ENCODE measurements at regions of chr7 and their contacts with region 1.

Region 1: DNA sequence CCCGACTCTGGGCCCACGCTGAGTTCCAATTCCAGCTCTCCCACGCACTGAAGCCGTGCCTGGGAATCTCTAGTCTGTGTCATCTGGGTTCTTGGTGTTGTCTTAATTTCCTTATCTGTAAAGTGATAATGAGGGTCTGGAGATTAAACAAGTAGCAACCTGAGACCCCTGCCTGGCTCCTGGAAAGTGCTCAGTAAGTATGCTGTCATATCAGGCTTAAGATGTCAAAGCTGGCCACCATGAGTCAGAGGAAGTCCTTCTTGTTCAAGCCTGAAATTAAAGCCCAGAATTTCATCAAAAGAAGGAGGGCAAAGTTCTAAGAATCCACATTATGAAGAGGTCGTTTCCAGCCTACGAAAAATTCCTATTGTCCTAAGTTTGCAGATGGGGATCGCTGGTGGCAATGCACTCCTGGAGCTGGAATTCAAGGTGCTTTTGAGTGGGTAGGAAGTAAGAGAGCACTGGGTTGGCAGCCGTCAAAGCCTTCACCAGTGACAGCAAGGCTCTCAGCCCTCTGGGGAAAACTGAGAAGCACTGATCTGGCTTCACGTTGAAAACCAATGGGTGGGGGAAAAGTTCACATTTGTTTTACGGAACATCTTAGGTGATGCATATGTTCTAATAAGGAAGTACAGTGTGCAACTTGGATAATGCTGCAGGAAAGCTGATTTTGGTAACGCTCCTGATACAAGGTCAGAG is 50.3 kb upstream of the NCAPG2 start:
- DNase-seq: no peak
- H3K4me3 ChIP-seq: no peak overlapping the region
- CTCF ChIP-seq: no peak

Region 2: DNA sequence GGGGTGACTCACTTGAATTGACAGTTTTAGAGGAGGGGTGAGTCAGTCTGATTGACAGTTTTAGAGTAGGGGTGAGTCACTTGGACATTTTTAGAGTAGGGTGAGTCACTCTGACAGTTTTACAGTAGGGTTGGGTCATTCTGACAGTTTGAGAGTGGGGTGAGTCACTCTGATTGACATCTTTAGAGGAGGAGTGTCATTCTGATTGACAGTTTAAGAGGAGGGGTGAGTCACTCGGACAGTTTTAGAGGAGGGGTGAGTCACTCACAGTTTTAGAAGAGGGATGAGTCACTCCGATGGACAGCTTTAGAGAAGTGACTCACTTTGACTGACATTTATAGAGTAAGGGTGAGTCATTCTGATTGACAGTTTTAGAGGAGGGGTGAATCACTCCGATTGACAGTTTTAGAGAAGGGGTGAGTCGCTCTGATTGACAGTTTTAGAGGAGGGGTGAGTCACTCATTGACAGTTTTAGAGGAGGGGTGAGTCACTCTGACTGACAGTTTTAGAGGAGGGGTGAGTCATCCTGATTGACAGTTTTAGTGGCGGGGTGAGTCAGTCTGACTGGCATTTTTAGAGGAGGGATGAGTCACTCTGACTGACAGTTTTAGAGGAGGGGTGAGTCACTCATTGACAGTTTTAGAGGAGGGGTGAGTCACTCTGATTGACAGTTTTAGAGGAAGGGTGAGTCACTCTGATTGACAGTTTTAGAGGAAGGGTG is 822.2 kb before region 1 on chr7:
- CTCF ChIA-PET with region 1: no interaction called
- POLR2A ChIA-PET with region 1: no interaction called
- DNase-seq: no peak
- H3K4me3 ChIP-seq: no peak overlapping the region
- CTCF ChIP-seq: no peak

Region 3: GRCh38 chr7:158587162-158588084 is 167.5 kb before region 1 on chr7 and contains the start of gene PTPRN2:
- CTCF ChIA-PET with region 1: no interaction called
- POLR2A ChIA-PET with region 1: no interaction called
- DNase-seq: no peak
- H3K4me3 ChIP-seq: peak within 1 kb of the TSS; percentile 49
- CTCF ChIP-seq: no peak

Region 4: GRCh38 chr7:158740013-158740656 is 14.8 kb before region 1 on chr7:
- CTCF ChIA-PET with region 1: interaction called, 14 read pairs
- POLR2A ChIA-PET with region 1: no interaction called
- DNase-seq: peak; percentile 58
- H3K4me3 ChIP-seq: 0 out of 2 replicates have a peak overlapping the region, but pooled peaks have one; percentile 12
- CTCF ChIP-seq: no peak

Region 5: GRCh38 chr7:158772911-158773310 is 18.0 kb after region 1 on chr7:
- CTCF ChIA-PET with region 1: no interaction called
- POLR2A ChIA-PET with region 1: no interaction called
- DNase-seq: no peak
- H3K4me3 ChIP-seq: no peak overlapping the region
- CTCF ChIP-seq: no peak

Region 6: DNA sequence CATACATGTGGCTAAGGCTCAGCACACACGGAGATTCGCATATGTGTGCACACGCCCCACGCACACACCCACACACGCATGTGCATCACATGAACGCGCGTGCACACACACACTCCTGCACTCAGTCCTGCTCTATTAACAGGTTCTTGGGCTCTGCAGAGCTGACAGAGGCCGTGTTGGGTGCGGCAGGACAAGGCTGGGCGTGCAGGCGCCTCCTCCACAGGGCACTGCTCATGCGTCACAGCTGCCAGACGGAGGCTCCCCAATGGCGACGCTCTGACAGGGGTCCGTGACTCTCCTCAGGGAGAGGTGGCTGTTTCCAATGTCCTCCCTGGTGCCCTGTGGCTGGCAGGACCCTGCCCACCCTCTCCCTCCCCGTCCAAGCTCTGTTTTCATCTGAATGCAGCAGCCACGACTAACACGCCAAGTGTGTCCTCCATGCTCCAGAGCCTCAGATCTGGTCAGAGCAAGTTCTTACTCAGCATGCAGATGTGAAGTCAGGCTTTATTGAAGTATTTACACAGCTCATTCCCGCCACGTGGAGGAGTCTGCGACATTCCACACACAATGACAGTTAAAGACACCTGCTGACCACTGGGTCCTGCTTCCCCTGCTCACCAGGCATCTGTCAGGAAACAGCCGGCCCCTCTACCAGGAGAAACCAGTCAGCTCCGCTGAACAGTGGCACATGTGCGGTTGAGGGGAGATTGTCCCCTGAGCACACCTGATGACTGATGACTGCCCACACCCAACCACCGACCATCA is 273.0 kb after region 1 on chr7:
- CTCF ChIA-PET with region 1: no interaction called
- POLR2A ChIA-PET with region 1: no interaction called
- DNase-seq: no peak
- H3K4me3 ChIP-seq: no peak overlapping the region
- CTCF ChIP-seq: no peak

Measured in AG04449 (cell line).